Left cardiac atrium (tissue), 4 donors: ENCODE measurements at regions of chr1 and their contacts with region 1.

Region 1: DNA sequence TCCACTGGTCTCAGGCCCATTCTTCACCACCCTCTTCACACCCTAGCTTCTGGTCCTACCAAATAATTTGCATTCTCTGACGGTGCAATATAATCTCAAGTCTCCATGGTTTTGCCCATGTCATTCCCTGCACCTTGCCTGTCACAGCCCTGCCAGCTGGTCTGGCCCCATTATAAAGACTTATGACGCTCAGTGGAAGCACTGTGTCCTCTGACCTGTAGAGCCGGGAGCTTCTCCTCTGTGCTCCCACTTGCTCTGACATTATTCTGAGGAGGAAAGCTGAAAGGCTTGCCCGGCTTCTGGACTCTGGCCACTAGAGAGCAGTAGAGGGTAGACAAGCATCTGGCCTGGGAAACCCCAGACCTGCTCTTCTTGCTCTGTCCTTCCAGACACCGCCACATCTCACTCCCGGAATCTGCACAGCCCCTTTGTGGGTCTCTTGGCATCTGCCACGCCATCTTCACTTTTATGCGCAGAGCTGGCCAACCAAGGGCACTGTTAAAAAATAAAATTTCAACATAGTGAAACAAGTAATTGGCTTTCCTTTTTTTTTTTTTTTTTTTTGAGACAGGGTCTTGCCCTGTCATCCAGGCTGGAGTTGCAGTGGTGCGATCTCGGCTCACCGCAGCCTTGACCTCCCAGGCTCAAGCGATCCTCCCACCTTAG is 44.4 kb downstream of the NENF start:
- DNase-seq: peak; percentile 82
- ATAC-seq: peak; percentile 93 to 95

Region 2: GRCh38 chr1:212608209-212608955 is 131.2 kb after region 1 on chr1 and contains the start of gene ATF3:
- intact Hi-C with region 1: loop called in 1 of 2 experiments (anchors 5 kb)
- DNase-seq: peak; percentile 100
- ATAC-seq: peak; percentile 94 to 95
- total RNA-seq, gene ATF3: 19.2 to 30.7 TPM

Region 3: GRCh38 chr1:212629450-212630157 is 152.5 kb after region 1 on chr1:
- intact Hi-C with region 1: loop called (anchors 5 kb)
- DNase-seq: no peak
- ATAC-seq: no peak

Region 4: DNA sequence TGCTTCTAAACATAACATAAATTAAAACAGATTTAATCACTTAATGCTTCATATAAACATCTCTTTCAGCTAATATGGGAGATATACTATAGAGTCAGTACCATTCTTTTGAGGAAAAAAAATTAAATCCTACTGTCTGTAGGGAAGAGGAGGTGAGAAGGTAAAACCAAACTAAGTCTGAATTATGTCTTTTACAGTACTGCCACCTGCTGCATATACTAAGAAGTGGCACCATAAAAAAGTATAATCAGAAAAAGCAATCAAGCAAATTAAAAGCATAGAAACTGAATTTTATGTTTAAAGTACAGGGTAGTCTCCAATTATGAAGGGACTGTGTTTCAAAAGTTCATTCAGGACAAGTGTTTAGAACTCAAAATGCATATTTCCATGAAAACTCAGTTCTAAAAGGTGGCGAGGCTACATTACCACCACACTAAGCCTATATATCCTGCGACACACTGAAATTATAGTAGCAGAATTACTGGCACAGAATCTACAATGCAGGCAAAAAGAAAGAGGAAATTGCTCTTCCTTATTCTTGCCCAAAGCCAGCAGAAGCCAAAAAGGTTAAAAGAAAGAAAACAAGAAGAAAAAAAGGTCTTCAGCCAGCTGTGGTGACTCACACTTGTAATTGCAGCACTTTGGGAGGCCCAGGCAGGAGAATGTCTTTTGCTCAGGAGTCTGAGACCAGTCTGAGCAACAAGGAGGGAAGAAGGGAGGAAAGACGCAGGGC is 305.4 kb after region 1 on chr1:
- intact Hi-C with region 1: loop called in 1 of 2 experiments (anchors 5 kb)
- DNase-seq: no peak
- ATAC-seq: peak; percentile 50 to 67